Psoas muscle (tissue), 8 donors: ENCODE measurements at regions of chr11 and their contacts with region 1.

Region 1: GRCh38 chr11:102495161-102496042 is 35.1 kb downstream of the MMP7 start:
- DNase-seq: no peak
- ATAC-seq: peak; percentile 55 to 92 (median 74)
- H3K4me3 ChIP-seq: no peak overlapping the region
- H3K27ac ChIP-seq: no peak overlapping the region
- H3K4me1 ChIP-seq: no peaks in the 10 kb centered on the region
- H3K27me3 ChIP-seq: peaks cover 0 to 6% (median 0%) of the 10 kb centered on the region in 3 donors
- CTCF ChIP-seq: peak; percentile 79

Region 2: DNA sequence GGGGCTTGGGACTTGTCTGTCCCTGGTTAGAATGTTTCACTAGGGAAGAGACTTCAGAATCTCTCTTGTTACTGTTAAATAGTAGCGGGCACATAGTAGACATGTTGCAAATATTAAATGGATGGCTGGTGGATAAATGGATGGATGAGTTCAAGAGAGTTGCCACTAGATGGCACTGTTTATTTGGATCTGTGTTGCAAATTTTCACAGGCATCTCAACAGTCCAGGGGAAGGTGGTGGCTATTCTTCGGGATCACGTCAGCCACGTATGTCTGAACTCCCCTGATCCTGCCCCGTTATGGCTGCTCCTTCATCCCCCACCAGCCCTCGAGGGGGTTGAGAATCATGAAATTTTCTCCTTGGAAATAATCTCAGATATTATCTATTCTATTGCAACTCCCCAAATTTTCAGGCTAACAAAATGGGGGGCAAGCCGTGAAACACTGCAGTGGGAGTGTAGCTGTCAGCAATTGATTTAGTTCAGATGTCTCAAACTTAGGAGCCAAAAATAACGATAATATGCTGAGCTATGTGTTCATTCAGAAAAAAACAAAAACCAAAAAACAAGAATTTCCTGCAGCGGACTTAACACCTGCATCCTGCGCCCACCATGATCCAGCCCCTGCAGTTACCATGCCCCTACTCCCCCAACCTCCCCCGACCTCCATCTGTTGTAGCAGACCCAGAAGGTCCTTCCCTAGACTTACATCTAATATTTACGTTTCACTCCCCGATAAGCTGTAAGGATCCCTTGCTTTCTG is 207.3 kb before region 1 on chr11:
- intact Hi-C with region 1: loop called in 1 of 2 experiments (anchors 2 kb)
- DNase-seq: no peak
- ATAC-seq: peak; percentile 88 to 95 (median 90)
- H3K4me3 ChIP-seq: peak overlapping the region; percentile 21
- H3K27ac ChIP-seq: no peak overlapping the region
- H3K4me1 ChIP-seq: no peaks in the 10 kb centered on the region
- H3K27me3 ChIP-seq: no peaks in the 10 kb centered on the region
- CTCF ChIP-seq: peak; percentile 71

Region 3: GRCh38 chr11:102341844-102342318 is 153.5 kb before region 1 on chr11:
- intact Hi-C with region 1: loop called (anchors 2 to 10 kb)
- DNase-seq: peak; percentile 47 to 59
- ATAC-seq: peak; percentile 53 to 72 (median 70)
- H3K4me3 ChIP-seq: no peak overlapping the region
- H3K27ac ChIP-seq: no peak overlapping the region
- H3K4me1 ChIP-seq: no peaks in the 10 kb centered on the region
- H3K27me3 ChIP-seq: no peaks in the 10 kb centered on the region
- CTCF ChIP-seq: peak; percentile 71

Region 4: DNA sequence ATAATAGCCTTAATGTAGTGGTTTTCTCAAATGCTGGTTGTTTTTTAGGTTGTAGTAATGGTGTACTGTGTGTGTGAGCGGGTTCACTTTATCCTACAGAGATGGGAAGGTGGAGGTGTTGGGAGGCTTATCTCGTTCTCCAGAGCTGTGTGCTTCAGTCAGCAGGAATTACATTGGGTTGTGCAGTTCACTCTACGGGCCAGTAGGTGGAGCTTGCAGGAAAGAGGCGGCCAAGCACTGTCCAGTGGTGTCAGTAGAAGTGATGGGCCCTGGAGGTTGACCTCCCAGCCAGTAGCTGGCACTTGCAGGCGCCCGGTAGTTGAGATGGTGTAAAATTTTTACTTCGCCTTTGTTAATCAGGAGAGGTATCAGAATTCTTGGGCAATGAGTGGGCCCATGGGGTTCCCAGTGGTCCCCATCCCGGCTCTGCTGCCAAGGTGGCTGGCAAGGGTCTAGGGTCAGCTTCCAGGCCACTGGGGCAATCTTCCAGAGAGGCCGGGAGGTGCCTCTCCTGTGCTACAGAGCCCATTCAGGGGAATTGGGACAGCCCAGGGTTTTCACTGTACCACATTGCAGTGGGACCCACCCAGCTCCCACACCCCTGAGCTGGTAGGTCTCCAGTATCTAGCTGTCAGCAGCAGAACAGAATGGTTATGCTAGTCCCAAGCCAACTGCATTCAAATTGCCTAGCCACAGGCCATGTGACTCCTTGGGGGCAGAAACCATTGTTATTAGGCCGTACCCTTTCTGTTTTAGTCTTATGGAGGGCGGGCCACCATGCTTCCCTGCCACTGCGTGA is 104.5 kb before region 1 on chr11:
- intact Hi-C with region 1: loop called (anchors 1 to 5 kb)
- DNase-seq: peak; percentile 50 to 75
- ATAC-seq: peak; percentile 85 to 94 (median 90)
- H3K4me3 ChIP-seq: no peak overlapping the region
- H3K27ac ChIP-seq: no peak overlapping the region
- H3K4me1 ChIP-seq: no peaks in the 10 kb centered on the region
- H3K27me3 ChIP-seq: no peaks in the 10 kb centered on the region
- CTCF ChIP-seq: peak; percentile 75